IMR-90 (cell line): ENCODE measurements at regions of chr2 and their contacts with region 1.

Region 1: GRCh38 chr2:162301151-162301804 is 17.2 kb downstream of the IFIH1 start:
- DNase-seq: peak; percentile 75
- ATAC-seq: peak; percentile 82
- H3K4me3 ChIP-seq: no peak overlapping the region
- H3K27ac ChIP-seq: no peak overlapping the region
- H3K4me1 ChIP-seq: no peaks in the 10 kb centered on the region
- H3K27me3 ChIP-seq: no peaks in the 10 kb centered on the region
- CTCF ChIP-seq: peak; percentile 86
- POLR2A ChIP-seq: no peak
- RAD21 ChIP-seq: peak; percentile 73

Region 2: DNA sequence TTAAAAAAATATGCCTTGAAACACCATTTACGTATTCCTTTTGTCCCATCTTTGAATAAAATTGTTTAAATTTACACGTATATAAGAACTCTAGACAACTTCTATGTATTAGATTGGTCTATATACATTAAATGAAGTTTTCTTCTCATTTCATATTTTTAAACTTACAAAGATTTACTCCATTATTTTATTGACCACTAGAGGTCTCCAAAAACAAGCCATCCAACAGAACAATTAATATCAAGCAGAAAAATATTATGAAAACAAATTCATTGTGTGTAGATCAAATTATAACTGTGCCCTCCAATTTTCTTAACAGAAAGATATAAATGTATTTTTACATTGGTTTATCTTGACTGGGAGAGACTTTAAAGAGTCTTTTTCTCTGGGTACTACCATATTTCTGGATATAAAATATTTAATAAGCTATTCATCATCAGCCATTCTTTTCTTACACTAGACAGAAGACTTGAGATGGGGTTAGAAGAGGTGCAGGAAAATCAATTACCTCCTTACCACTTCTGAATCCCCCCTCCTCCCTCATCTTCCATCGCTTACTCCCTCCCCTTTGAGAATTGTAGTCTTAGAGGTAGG is 293.7 kb before region 1 on chr2:
- CTCF ChIA-PET with region 1: no interaction called
- POLR2A ChIA-PET with region 1: no interaction called
- dilution Hi-C with region 1: no loop called
- in situ Hi-C with region 1: no loop called
- intact Hi-C with region 1: loop called (anchors 5 kb)
- DNase-seq: peak; percentile 16
- ATAC-seq: no peak
- H3K4me3 ChIP-seq: no peak overlapping the region
- H3K27ac ChIP-seq: no peak overlapping the region
- H3K4me1 ChIP-seq: peaks cover 2% of the 10 kb centered on the region; the same call in 1 of the 2 replicates
- H3K27me3 ChIP-seq: no peaks in the 10 kb centered on the region
- CTCF ChIP-seq: peak; percentile 61
- POLR2A ChIP-seq: no peak
- RAD21 ChIP-seq: peak; percentile 51

Region 3: GRCh38 chr2:162153608-162154224 is 147.6 kb before region 1 on chr2:
- CTCF ChIA-PET with region 1: interaction called, 18 read pairs
- POLR2A ChIA-PET with region 1: no interaction called
- dilution Hi-C with region 1: no loop called
- in situ Hi-C with region 1: loop called (anchors 5 kb)
- intact Hi-C with region 1: loop called (anchors 1 kb)
- DNase-seq: peak; percentile 49
- ATAC-seq: peak; percentile 83; the same call in 1 of the 2 replicates
- H3K4me3 ChIP-seq: no peak overlapping the region
- H3K27ac ChIP-seq: no peak overlapping the region
- H3K4me1 ChIP-seq: no peaks in the 10 kb centered on the region
- H3K27me3 ChIP-seq: no peaks in the 10 kb centered on the region
- CTCF ChIP-seq: peak; percentile 56
- POLR2A ChIP-seq: no peak
- RAD21 ChIP-seq: peak; percentile 69

Region 4: GRCh38 chr2:162221064-162221463 is 80.2 kb before region 1 on chr2:
- CTCF ChIA-PET with region 1: interaction called, 25 read pairs
- POLR2A ChIA-PET with region 1: no interaction called
- dilution Hi-C with region 1: no loop called
- in situ Hi-C with region 1: loop called (anchors 5 kb)
- intact Hi-C with region 1: loop called (anchors 1 kb)
- DNase-seq: peak; percentile 55
- ATAC-seq: peak; percentile 78
- H3K4me3 ChIP-seq: no peak overlapping the region
- H3K27ac ChIP-seq: no peak overlapping the region
- H3K4me1 ChIP-seq: no peaks in the 10 kb centered on the region
- H3K27me3 ChIP-seq: no peaks in the 10 kb centered on the region
- CTCF ChIP-seq: peak; percentile 82
- POLR2A ChIP-seq: no peak
- RAD21 ChIP-seq: peak; percentile 92

Region 5: GRCh38 chr2:162254236-162254871 is 46.9 kb before region 1 on chr2:
- CTCF ChIA-PET with region 1: no interaction called
- POLR2A ChIA-PET with region 1: no interaction called
- dilution Hi-C with region 1: no loop called
- in situ Hi-C with region 1: no loop called
- intact Hi-C with region 1: no loop called
- DNase-seq: no peak
- ATAC-seq: no peak
- H3K4me3 ChIP-seq: no peak overlapping the region
- H3K27ac ChIP-seq: no peak overlapping the region
- H3K4me1 ChIP-seq: no peaks in the 10 kb centered on the region
- H3K27me3 ChIP-seq: no peaks in the 10 kb centered on the region
- CTCF ChIP-seq: no peak
- POLR2A ChIP-seq: no peak
- RAD21 ChIP-seq: no peak

Region 6: GRCh38 chr2:163302141-163302540 is 1000.9 kb after region 1 on chr2:
- CTCF ChIA-PET with region 1: no interaction called
- POLR2A ChIA-PET with region 1: no interaction called
- dilution Hi-C with region 1: no loop called
- in situ Hi-C with region 1: no loop called
- intact Hi-C with region 1: no loop called
- DNase-seq: no peak
- ATAC-seq: no peak
- H3K4me3 ChIP-seq: no peak overlapping the region
- H3K27ac ChIP-seq: no peak overlapping the region
- H3K4me1 ChIP-seq: no peaks in the 10 kb centered on the region
- H3K27me3 ChIP-seq: no peaks in the 10 kb centered on the region; the same call in 1 of the 2 replicates
- CTCF ChIP-seq: no peak
- POLR2A ChIP-seq: no peak
- RAD21 ChIP-seq: no peak